BJ (cell line): ENCODE measurements at regions of chr11 and their contacts with region 1.

Region 1: GRCh38 chr11:75570559-75571139 is 8.6 kb downstream of the SERPINH1 start:
- DNase-seq: no peak
- H3K4me3 ChIP-seq: no peak overlapping the region
- H3K27me3 ChIP-seq: no peaks in the 10 kb centered on the region
- CTCF ChIP-seq: no peak

Region 2: DNA sequence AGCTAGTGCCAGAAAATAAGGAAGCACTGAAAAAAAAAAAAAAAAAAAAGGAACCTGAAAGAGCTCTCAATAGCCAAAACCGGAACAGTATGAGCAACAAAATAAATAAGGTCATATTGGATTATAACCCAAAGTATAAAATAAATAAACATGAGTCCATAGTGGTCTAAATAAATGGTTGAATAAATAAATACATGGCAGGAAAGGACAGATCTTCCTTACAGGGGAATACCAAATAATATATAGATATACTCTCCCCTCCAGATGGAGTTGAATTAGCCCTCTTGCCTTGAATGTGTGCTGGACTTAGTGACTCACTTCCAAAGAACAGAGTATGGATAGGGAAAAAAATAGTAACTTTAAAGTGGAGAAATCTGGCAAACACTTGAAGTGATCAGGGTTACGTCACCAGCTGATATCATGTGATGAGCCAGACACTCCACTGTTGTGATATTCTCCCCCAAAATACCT is 204.9 kb before region 1 on chr11:
- CTCF ChIA-PET with region 1: no interaction called
- POLR2A ChIA-PET with region 1: no interaction called
- DNase-seq: no peak
- H3K4me3 ChIP-seq: no peak overlapping the region
- H3K27me3 ChIP-seq: peaks cover 8% of the 10 kb centered on the region
- CTCF ChIP-seq: no peak

Region 3: DNA sequence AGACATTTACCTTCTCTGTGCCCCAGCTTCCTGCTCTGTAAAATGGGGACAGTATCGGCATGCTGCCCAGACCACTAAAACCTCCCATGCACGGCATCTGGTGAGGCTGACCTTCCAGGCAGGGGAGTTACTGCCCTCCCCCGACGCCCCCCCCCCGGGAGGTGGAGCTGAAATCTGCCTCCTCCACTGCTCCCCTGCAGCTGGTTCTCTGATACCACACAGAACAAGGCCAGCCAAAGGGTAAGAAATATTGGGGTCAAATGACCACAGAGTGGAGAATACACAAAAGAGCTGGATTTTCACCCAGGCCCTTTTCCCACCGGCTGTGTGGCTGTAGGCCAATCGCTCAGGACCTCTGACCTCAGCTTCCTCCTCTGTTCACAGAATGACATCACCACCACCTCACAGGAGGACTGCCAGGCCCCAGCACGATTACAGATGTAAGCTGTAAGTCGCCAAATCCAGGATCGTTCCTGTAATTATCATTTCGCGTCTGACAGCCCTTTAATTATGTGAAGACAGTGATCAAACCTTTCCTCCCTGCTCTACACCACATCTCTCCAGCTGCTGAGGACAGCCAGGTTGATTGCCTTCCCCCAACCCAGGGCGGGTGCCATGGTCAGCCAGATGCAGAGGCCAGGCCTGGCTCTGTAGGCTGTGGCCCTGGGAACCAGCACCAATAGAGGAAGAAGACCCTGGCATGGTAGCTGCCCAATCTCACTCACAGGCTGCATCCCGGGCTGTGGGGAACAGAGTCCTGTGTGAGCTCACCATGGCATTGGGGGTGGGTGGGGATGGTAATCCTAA is 101.9 kb before region 1 on chr11:
- CTCF ChIA-PET with region 1: no interaction called
- POLR2A ChIA-PET with region 1: no interaction called
- DNase-seq: no peak
- H3K4me3 ChIP-seq: no peak overlapping the region
- H3K27me3 ChIP-seq: no peaks in the 10 kb centered on the region
- CTCF ChIP-seq: no peak

Region 4: DNA sequence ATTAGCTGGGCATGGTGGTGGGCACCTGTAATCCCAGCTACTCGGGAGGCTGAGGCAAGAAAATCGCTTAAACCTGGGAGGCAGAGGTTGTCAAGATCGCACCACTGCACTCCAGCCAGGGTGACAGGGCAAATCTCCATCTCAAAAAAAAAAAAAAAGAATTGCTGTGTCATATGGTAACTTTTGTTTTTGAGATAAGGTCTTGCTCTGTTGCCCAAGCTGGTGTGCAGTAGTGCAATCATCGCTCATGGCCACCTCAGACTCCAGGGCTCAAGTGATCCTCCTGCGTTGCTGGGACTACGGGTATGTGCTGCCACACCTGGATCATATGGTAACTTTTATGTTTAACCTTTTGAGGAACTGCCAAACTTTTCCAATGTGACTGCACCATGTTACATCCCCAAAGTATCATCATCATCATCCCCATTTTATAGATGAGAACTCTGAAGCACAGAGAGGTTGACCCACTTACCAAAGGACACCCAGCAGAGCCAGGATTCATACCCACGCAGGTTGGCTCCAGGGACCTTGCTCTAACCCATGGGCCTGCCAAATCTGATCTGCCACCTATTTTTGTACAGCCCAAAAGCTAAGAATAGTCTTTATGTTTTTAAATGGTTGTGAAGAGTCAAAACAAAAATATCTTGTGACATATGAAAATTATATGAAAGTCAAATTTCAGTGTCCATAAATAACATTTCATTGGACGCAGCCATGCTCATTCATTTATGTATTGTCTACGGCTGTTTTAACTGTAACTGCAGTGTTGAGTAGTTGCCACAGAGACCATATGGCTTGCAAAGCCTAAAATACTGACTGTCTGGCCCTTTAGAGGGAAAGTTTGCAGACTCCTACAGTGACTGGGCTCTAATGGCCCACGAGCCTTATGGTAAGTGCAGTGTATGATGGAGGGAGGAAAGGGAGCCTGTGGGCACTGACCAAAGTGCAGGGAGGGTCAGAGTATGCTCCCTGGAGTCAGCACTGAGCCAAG is 90.2 kb before region 1 on chr11:
- CTCF ChIA-PET with region 1: no interaction called
- POLR2A ChIA-PET with region 1: no interaction called
- DNase-seq: no peak
- H3K4me3 ChIP-seq: no peak overlapping the region
- H3K27me3 ChIP-seq: no peaks in the 10 kb centered on the region
- CTCF ChIP-seq: no peak

Region 5: DNA sequence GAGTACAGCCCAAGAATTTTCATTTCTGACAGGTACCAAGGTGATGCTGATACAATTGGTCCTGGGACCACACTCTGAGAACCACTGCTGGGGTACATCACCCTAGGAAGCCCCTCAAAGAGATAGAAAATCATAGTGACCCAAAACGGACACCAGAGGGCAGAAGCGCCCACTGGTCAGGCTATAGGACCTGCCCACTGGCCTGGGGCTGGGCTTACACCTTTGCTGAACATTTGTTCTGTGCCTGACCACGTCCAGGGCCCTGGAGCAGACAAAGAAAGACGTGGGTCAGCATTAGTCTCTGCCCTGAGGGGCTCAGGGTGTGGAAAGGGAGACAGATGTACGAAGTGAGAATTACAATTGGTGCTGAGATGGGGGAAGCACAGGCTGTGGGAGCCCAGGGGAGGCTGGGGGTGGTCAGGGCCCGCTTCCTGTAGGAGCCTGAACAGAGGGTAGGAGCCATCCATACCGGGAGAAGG is 23.0 kb before region 1 on chr11:
- CTCF ChIA-PET with region 1: interaction called, 69 read pairs
- POLR2A ChIA-PET with region 1: no interaction called
- DNase-seq: no peak
- H3K4me3 ChIP-seq: no peak overlapping the region
- H3K27me3 ChIP-seq: peaks cover 5% of the 10 kb centered on the region
- CTCF ChIP-seq: peak; percentile 83